Caco-2 (cell line): ENCODE measurements at regions of chr1 and their contacts with region 1.

Region 1: GRCh38 chr1:9784508-9785133 is 39.1 kb downstream of the CLSTN1 start:
- DNase-seq: peak; percentile 45 to 55
- H3K4me3 ChIP-seq: no peak overlapping the region
- H3K4me3 Mint-ChIP-seq: no peak overlapping the region
- H3K27ac Mint-ChIP-seq: no peak overlapping the region
- H3K4me1 ChIP-seq: no peaks in the 10 kb centered on the region
- H3K4me1 Mint-ChIP-seq: no peaks in the 10 kb centered on the region
- H3K27me3 ChIP-seq: no peaks in the 10 kb centered on the region
- H3K27me3 Mint-ChIP-seq: no peaks in the 10 kb centered on the region
- CTCF ChIP-seq: peak; percentile 65 to 68

Region 2: DNA sequence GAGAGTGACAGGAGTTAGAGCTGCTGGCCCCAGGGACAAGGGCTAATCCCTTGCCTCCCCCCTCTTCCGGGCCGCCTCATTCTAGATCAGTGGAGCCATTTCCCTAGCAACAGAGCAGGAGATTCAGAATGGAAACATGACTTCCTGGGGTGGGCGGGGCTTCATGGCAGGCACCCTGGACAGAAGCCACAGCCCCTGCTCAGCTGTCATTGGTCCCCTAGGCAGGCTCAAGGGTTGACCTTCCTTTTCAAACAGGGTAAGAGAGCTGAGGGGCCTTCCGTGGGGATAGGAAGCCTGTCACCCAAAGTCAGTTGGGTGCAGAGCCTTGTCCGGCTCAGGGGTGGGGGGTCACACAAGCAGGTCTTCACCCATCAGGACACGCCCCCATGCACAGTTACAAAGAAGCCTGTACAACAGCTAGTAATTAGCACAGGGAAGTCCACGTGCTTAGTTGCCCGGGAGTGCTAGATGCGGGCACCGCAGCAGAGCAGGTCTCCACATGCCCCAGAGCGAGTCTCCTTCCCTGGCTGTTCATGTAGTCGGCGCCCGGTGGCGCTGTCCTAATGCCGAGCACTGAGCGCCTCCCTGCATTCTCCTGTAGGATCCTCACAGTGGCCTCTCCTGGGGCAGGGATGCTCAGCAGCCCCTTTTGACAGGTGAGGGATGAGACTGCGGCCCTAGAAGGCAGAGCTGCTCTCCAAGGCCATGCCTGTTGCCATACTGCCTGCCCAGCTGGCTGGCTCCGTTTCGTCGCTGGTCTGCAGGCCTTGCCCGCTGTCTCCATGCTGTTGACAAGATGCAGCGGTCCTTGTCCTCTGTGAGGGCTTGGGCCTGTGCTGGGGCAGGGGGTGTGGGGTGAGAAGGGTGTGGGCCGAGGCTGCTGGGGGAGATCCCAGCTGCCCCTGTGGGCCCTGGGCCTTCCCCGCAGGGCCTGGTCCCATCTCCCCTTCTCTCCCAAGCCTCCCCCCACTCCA is 190.8 kb before region 1 on chr1:
- CTCF ChIA-PET with region 1: no interaction called
- POLR2A ChIA-PET with region 1: no interaction called
- intact Hi-C with region 1: no loop called
- DNase-seq: peak in 1 of 2 experiments; percentile 24
- H3K4me3 ChIP-seq: no peak overlapping the region
- H3K4me3 Mint-ChIP-seq: no peak overlapping the region
- H3K27ac Mint-ChIP-seq: no peak overlapping the region
- H3K4me1 ChIP-seq: peaks cover 7% of the 10 kb centered on the region; the same call in 1 of the 2 replicates
- H3K4me1 Mint-ChIP-seq: no peaks in the 10 kb centered on the region
- H3K27me3 ChIP-seq: no peaks in the 10 kb centered on the region
- H3K27me3 Mint-ChIP-seq: no peaks in the 10 kb centered on the region
- CTCF ChIP-seq: no peak

Region 3: DNA sequence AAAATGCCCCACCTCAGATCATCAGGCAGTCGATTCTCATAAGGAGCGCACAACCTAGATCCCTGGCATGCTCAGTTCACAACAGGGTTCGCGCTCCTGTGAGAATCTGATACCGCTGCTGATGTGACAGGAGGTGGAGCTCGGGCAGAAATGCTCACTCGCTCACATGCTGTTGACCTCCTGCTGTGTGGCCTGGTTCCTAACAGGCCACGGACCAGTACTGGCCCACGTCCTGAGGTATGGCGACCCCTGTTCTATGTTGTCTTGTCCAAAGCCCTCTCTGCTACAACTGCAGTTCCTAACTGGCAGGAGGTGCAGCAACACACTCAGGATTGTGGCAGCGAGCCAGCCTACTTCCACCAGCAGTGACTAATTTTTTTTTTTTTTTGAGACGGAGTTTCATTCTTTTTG is 31.5 kb before region 1 on chr1:
- CTCF ChIA-PET with region 1: no interaction called
- POLR2A ChIA-PET with region 1: no interaction called
- intact Hi-C with region 1: no loop called
- DNase-seq: no peak
- H3K4me3 ChIP-seq: no peak overlapping the region
- H3K4me3 Mint-ChIP-seq: no peak overlapping the region
- H3K27ac Mint-ChIP-seq: no peak overlapping the region
- H3K4me1 ChIP-seq: no peaks in the 10 kb centered on the region
- H3K4me1 Mint-ChIP-seq: peaks cover 7% of the 10 kb centered on the region
- H3K27me3 ChIP-seq: no peaks in the 10 kb centered on the region
- H3K27me3 Mint-ChIP-seq: no peaks in the 10 kb centered on the region
- CTCF ChIP-seq: no peak

Region 4: GRCh38 chr1:9816199-9816598 is 31.6 kb after region 1 on chr1:
- CTCF ChIA-PET with region 1: no interaction called
- POLR2A ChIA-PET with region 1: interaction called, 11 read pairs
- intact Hi-C with region 1: no loop called
- DNase-seq: no peak
- H3K4me3 ChIP-seq: no peak overlapping the region
- H3K4me3 Mint-ChIP-seq: no peak overlapping the region
- H3K27ac Mint-ChIP-seq: peak overlapping the region; percentile 25
- H3K4me1 ChIP-seq: peaks cover 15% of the 10 kb centered on the region
- H3K4me1 Mint-ChIP-seq: peaks cover 15% of the 10 kb centered on the region
- H3K27me3 ChIP-seq: no peaks in the 10 kb centered on the region
- H3K27me3 Mint-ChIP-seq: no peaks in the 10 kb centered on the region
- CTCF ChIP-seq: no peak

Region 5: GRCh38 chr1:9827558-9828185 is 43.1 kb after region 1 on chr1:
- CTCF ChIA-PET with region 1: interaction called, 3 read pairs
- POLR2A ChIA-PET with region 1: no interaction called
- intact Hi-C with region 1: loop called (anchors 1 kb)
- DNase-seq: no peak
- H3K4me3 ChIP-seq: no peak overlapping the region
- H3K4me3 Mint-ChIP-seq: no peak overlapping the region
- H3K27ac Mint-ChIP-seq: no peak overlapping the region
- H3K4me1 ChIP-seq: peaks cover 16% of the 10 kb centered on the region; the same call in 1 of the 2 replicates
- H3K4me1 Mint-ChIP-seq: peaks cover 13% of the 10 kb centered on the region
- H3K27me3 ChIP-seq: no peaks in the 10 kb centered on the region
- H3K27me3 Mint-ChIP-seq: no peaks in the 10 kb centered on the region
- CTCF ChIP-seq: peak; percentile 23 to 32

Region 6: DNA sequence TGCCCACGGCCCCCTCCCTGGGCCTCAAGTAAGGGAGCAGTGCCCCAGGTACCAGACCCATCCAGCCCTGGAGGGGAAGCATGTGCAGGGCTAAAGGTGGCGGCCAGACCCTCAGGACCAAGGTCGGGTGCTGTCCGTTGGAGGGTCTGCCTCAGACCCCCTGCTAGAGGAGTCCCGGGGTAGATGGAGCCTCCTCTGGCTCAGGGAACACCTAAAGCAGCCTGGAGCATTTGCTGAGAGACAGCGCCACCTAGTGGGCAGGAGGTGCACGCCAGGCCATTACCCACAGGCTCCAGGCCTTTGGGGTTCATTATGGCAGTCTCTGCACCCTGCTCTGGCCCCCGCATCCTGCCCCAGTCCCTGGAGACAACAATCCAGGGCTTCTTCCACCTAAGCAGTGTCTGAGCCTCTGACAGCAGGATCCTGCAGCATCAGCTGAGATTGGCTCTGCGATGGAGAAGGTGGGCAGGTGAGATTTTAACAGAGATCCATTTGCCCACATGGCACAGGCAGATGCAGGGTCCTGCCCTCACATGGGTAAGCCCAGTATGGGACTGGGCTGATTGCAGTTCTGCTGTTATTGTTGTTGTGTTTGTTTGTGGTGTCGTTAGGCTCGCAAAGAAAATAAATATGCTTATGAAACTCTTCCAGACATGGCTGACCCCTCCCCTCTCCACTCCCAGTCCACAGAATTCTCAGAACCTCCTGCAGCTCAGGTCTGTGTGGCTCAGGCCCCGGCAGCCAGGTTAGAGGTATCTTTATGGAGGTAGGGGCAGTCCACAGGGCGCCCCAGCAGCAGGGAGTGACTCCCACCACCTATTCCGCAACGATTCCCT is 83.0 kb after region 1 on chr1:
- CTCF ChIA-PET with region 1: interaction called, 9 read pairs
- POLR2A ChIA-PET with region 1: no interaction called
- intact Hi-C with region 1: loop called (anchors 1 kb)
- DNase-seq: peak; percentile 68 to 82
- H3K4me3 ChIP-seq: no peak overlapping the region
- H3K4me3 Mint-ChIP-seq: no peak overlapping the region
- H3K27ac Mint-ChIP-seq: no peak overlapping the region
- H3K4me1 ChIP-seq: no peaks in the 10 kb centered on the region
- H3K4me1 Mint-ChIP-seq: no peaks in the 10 kb centered on the region
- H3K27me3 ChIP-seq: no peaks in the 10 kb centered on the region
- H3K27me3 Mint-ChIP-seq: no peaks in the 10 kb centered on the region
- CTCF ChIP-seq: peak; percentile 89 to 95

Region 7: GRCh38 chr1:10022656-10023055 is 238.0 kb after region 1 on chr1:
- CTCF ChIA-PET with region 1: no interaction called
- POLR2A ChIA-PET with region 1: no interaction called
- intact Hi-C with region 1: no loop called
- DNase-seq: no peak
- H3K4me3 ChIP-seq: no peak overlapping the region
- H3K4me3 Mint-ChIP-seq: no peak overlapping the region
- H3K27ac Mint-ChIP-seq: no peak overlapping the region
- H3K4me1 ChIP-seq: peaks cover 4% of the 10 kb centered on the region; the same call in 1 of the 2 replicates
- H3K4me1 Mint-ChIP-seq: no peaks in the 10 kb centered on the region
- H3K27me3 ChIP-seq: no peaks in the 10 kb centered on the region
- H3K27me3 Mint-ChIP-seq: no peaks in the 10 kb centered on the region
- CTCF ChIP-seq: no peak